Panc1 (cell line): ENCODE measurements at regions of chr6 and their contacts with region 1.

Region 1: GRCh38 chr6:87237804-87238203 is 82.4 kb downstream of the ZNF292 start:
- DNase-seq: peak; percentile 20
- ATAC-seq: no peak
- H3K4me3 ChIP-seq: no peak overlapping the region
- H3K27ac ChIP-seq: no peak overlapping the region
- H3K4me1 ChIP-seq: no peaks in the 10 kb centered on the region
- H3K27me3 ChIP-seq: no peaks in the 10 kb centered on the region
- CTCF ChIP-seq: peak; percentile 66; the same call in 1 of the 2 replicates

Region 2: GRCh38 chr6:87078983-87079616 is 158.7 kb before region 1 on chr6:
- CTCF ChIA-PET with region 1: no interaction called
- POLR2A ChIA-PET with region 1: no interaction called
- in situ Hi-C with region 1: no loop called
- intact Hi-C with region 1: loop called (anchors 10 kb)
- DNase-seq: peak; percentile 42
- ATAC-seq: peak; percentile 98
- H3K4me3 ChIP-seq: no peak overlapping the region
- H3K27ac ChIP-seq: no peak overlapping the region
- H3K4me1 ChIP-seq: no peaks in the 10 kb centered on the region
- H3K27me3 ChIP-seq: peaks cover 6% of the 10 kb centered on the region; the same call in 1 of the 2 replicates
- CTCF ChIP-seq: peak; percentile 97

Region 3: DNA sequence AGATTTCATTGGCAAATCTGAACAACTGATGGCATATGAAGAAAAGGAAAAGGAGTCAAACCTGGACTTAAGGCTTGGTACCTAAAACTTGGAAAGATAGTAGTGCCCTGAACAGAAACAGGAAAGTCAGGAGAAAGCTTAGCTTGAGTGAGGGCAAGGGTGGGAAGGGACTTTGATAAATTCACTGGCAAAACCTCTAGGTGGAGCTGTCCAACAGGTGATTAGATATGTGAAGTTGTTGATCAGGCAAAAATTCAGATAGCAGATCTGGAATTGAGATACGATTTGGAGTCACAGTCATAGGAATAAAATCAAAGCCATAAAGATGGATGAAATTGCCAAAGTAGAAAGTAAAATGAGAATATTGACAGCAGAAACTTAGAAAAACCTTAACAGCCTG is 98.6 kb before region 1 on chr6:
- CTCF ChIA-PET with region 1: no interaction called
- POLR2A ChIA-PET with region 1: no interaction called
- in situ Hi-C with region 1: no loop called
- intact Hi-C with region 1: loop called (anchors 5 kb)
- DNase-seq: no peak
- ATAC-seq: peak; percentile 84
- H3K4me3 ChIP-seq: no peak overlapping the region
- H3K27ac ChIP-seq: no peak overlapping the region
- H3K4me1 ChIP-seq: no peaks in the 10 kb centered on the region
- H3K27me3 ChIP-seq: no peaks in the 10 kb centered on the region; the same call in 1 of the 2 replicates
- CTCF ChIP-seq: peak; percentile 78

Region 4: DNA sequence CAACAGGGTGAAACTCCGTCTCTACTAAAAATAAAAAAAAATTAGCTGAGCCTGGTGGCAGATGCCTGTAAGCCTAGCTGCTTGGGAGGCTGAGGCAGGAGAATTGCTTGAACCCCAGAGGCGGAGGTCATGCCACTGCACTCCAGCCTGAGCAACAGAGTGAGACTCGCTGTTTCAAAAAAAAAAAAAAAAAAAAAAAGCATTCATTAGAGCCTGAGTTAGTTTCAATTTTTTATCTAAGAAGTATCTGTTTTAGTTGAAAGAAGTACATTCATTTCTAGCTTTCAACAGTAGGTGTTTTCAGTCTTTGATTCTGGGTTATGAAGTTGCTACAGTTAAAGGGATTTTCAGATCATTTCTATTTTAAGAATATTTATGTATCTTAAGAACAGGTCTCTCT is 40.3 kb before region 1 on chr6:
- CTCF ChIA-PET with region 1: no interaction called
- POLR2A ChIA-PET with region 1: no interaction called
- in situ Hi-C with region 1: no loop called
- intact Hi-C with region 1: no loop called
- DNase-seq: no peak
- ATAC-seq: no peak
- H3K4me3 ChIP-seq: no peak overlapping the region
- H3K27ac ChIP-seq: no peak overlapping the region
- H3K4me1 ChIP-seq: no peaks in the 10 kb centered on the region
- H3K27me3 ChIP-seq: no peaks in the 10 kb centered on the region
- CTCF ChIP-seq: no peak